ENCODE measurements at regions of chr7 and their contacts with region 1.

Region 1: DNA sequence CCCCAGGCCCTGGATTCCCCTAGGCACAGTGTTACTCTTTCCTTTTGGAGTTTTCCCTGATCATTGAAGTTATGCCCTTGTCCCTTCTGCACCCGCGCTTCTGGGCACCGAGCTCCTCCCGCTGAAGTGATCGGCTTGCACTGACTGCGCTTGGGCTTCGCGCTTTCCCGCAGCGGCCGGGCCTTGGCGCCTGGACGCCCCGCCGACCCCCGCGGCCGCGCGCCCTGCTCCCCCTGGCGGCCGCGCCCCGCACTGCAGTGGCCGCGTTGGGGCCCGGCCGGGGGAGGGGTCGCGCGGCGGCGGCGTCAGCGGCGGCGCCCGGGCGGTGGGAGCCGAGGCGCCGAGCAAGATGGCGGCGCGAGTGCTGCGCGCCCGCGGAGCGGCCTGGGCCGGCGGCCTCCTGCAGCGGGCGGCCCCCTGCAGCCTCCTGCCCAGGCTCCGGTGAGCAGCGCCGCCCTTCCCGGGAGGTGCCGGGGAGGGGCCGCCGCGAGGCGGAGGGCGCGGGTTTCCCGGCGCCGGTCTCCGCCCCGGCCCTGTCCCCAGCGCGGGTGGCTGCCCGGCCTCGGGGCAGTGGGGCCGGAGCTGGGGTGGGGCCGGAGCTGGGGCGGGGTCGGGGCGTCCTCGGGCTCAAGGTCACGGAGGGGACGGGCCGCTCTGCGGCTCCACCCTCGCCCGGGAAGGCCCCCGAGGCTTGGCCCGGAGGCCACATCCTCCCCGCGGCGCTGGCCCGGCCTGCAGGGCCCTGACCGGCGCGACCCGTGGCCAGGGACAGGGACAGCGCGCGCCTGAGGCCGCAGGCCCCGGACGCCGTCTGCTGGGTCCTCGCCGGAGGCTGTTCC is at the start of gene NIPSNAP2:
- DNase-seq: peak; percentile 64 to 80 (median 72)
- H3K4me3 ChIP-seq: peak within 1 kb of the TSS; percentile 71
- H3K27ac ChIP-seq: peak within 1 kb of the TSS; percentile 97 to 99
- H3K4me1 ChIP-seq: peaks cover 7% of the 10 kb centered on the region
- H3K27me3 ChIP-seq: no peaks in the 10 kb centered on the region
- CTCF ChIP-seq: peak in 2 of 3 donors; percentile 49 to 68
- EP300 ChIP-seq: no peak
- POLR2A ChIP-seq: no peak
- total RNA-seq, gene NIPSNAP2: 51.5 to 78.5 (median 56.9) TPM

Region 2: DNA sequence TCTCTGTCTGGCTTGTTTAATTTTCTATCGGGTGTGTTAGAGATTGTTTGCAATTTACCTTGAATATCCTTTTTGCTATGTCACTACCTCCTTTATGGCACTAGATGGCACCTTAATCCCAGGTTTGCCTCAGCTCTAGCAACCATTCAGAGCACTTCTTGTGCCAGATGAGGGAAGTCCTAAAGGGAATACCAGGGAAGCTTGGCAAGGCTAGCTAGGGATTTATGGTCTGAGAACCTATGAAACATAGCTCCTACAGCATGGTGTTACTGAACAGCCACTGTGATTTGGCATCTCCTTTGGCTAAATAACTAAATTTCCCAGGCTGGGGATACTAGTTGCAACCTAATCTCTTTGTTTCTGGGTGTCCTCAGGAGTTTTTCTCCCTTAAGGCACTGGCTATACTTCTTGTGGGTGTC is 323.2 kb before region 1 on chr7:
- intact Hi-C with region 1: loop called in 1 of 4 experiments (anchors 10 kb)
- DNase-seq: peak in 3 of 5 donors; percentile 23 to 37 (median 27)
- H3K4me3 ChIP-seq: no peak overlapping the region
- H3K27ac ChIP-seq: no peak overlapping the region
- H3K4me1 ChIP-seq: no peaks in the 10 kb centered on the region
- H3K27me3 ChIP-seq: no peaks in the 10 kb centered on the region
- CTCF ChIP-seq: peak; percentile 10 to 79 (median 70)
- EP300 ChIP-seq: no peak
- POLR2A ChIP-seq: no peak

Region 3: DNA sequence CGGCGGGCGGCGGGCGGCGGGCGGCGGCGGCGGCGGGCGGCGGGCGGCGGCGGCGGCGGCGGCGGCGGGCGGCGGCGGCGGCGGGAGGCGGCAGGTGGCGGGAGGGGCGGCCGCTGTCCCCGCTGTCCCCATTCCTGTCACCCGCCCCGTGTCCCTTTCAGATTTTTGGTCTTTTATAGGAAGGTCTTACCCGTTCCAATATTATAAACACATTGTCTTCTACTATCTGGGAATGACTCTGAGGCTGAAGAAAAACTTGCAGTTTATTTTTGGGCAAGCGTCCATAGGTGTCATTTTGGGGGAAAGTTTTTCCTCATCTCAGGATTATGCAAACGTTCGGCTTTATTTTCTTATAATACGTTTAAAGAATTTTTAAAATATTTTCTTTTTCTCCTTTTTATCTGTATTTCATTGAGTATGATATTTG is 76.6 kb before region 1 on chr7:
- intact Hi-C with region 1: loop called in 1 of 4 experiments (anchors 10 kb)
- DNase-seq: peak in 2 of 5 donors; percentile 27 to 28
- H3K4me3 ChIP-seq: peak overlapping the region; percentile 59
- H3K27ac ChIP-seq: no peak overlapping the region
- H3K4me1 ChIP-seq: no peaks in the 10 kb centered on the region
- H3K27me3 ChIP-seq: no peaks in the 10 kb centered on the region
- CTCF ChIP-seq: no peak
- EP300 ChIP-seq: no peak
- POLR2A ChIP-seq: no peak

Region 4: GRCh38 chr7:56074371-56074791 is 109.9 kb after region 1 on chr7:
- intact Hi-C with region 1: loop called in 3 of 4 experiments (anchors 5 to 10 kb)
- DNase-seq: peak; percentile 74 to 87 (median 85)
- H3K4me3 ChIP-seq: no peak overlapping the region
- H3K27ac ChIP-seq: no peak overlapping the region
- H3K4me1 ChIP-seq: no peaks in the 10 kb centered on the region
- H3K27me3 ChIP-seq: no peaks in the 10 kb centered on the region
- CTCF ChIP-seq: peak; percentile 76 to 86 (median 80)
- EP300 ChIP-seq: no peak
- POLR2A ChIP-seq: no peak

Region 5: DNA sequence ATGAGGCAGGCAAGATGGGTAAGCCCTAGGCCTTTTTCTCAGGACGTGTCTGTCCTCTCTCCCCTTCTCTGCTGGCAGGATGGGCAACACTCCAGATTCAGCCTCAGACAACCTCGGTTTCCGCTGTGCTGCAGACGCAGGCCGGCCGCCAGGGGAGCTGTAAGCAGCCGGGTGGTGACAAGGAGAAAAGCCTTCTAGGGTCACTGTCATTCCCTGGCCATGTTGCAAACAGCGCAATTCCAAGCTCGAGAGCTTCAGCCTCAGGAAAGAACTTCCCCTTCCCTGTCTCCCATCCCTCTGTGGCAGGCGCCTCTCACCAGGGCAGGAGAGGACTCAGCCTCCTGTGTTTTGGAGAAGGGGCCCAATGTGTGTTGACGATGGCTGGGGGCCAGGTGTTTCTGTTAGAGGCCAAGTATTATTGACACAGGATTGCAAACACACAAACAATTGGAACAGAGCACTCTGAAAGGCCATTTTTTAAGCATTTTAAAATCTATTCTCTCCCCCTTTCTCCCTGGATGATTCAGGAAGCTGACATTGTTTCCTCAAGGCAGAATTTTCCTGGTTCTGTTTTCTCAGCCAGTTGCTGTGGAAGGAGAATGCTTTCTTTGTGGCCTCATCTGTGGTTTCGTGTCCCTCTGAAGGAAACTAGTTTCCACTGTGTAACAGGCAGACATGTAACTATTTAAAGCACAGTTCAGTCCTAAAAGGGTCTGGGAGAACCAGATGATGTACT is 115.1 kb after region 1 on chr7:
- intact Hi-C with region 1: loop called in 3 of 4 experiments (anchors 5 to 10 kb)
- DNase-seq: peak; percentile 74 to 85 (median 79)
- H3K4me3 ChIP-seq: no peak overlapping the region
- H3K27ac ChIP-seq: peak overlapping the region; percentile 4 to 32
- H3K4me1 ChIP-seq: peaks cover 6% of the 10 kb centered on the region
- H3K27me3 ChIP-seq: no peaks in the 10 kb centered on the region
- CTCF ChIP-seq: peak; percentile 35 to 71 (median 55)
- EP300 ChIP-seq: no peak
- POLR2A ChIP-seq: no peak

Measured in ovary (tissue), 10 donors.